ENCODE measurements at regions of chr11 and their contacts with region 1.

Region 1: DNA sequence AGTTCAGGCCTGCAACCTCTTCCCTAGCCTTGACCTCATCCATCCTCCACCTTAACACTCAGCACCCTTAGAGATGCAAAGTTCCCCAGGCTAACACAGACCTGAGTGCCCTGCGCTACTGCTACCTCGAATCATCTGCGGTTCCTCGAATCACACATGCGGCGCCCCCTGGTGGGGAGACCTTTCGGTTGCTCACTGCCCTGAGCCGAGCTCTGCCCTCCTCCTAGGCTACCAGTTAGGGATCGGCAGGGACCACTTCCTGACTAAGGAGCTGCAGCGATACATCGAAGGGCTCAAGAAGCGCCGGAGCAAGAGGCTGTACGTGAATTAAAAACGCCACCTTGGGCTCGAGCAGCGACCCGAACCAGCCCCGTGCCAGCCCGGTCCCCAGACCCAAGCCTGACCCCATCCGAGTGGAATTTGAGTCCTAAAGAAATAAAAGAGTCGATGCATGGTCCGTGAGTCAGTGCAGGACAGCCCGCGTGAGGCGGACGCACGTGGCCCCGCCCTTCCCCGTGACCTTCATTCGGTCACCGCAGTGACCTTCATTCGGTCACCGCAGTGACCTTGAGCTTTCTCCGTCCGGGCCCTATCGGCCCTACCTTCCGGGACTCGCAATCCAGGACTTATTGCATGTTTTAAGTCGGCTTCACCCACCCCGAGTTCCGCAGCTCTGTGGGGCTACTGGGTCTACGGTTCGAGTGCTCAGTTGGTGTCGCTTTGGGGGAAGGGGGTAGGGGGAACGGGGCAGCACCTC is 830 bp upstream of the ESRRA start:
- DNase-seq: peak; percentile 78
- H3K4me3 ChIP-seq: peak overlapping the region; percentile 72
- H3K27ac ChIP-seq: peak overlapping the region; percentile 84
- H3K27me3 ChIP-seq: peaks cover 14% of the 10 kb centered on the region
- CTCF ChIP-seq: peak; percentile 84

Region 2: DNA sequence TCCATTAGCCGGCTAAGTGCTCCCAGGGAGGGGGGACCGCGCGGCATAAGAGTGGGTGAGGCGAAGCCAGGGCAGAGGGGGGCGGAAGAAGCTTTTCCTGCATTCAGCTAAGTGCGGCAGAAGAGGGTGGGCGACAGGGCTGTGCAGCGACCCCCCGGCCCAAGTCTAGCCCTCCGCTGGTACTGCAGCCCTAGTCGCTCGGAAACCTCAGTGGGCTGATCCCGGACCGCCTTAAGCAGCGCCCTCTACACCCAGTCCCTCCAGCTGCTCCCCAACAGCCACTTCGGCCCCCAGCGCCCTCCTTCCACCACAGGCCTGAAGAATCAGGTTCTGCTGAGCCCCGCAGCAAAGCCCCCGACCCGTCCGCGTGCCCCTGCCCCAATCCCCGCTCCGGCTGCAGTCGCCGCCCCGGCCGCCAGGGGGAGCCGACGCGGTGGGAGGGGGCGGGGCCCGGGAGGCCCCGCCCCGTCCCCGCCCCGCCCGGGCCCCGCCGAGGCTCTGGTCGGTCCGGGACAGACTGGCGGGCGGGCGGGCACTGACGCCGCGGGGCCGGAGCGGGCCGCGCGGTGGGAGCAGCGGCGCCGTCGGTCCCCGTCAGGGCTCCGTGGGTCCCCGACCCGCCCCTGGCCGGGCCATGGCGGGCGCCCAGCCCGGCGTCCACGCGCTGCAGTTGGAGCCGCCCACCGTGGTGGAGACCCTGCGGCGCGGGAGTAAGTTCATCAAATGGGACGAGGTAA is 53.3 kb before region 1 on chr11 and contains the start of gene PLCB3:
- CTCF ChIA-PET with region 1: interaction called, 50 read pairs
- POLR2A ChIA-PET with region 1: no interaction called
- DNase-seq: no peak
- H3K4me3 ChIP-seq: peak within 1 kb of the TSS; percentile 77
- H3K27ac ChIP-seq: peak within 1 kb of the TSS; percentile 11
- H3K27me3 ChIP-seq: no peaks in the 10 kb centered on the region
- CTCF ChIP-seq: peak; percentile 53
- polyA plus RNA-seq, gene PLCB3: 11.7 and 13.0 TPM in 2 replicates

Region 3: DNA sequence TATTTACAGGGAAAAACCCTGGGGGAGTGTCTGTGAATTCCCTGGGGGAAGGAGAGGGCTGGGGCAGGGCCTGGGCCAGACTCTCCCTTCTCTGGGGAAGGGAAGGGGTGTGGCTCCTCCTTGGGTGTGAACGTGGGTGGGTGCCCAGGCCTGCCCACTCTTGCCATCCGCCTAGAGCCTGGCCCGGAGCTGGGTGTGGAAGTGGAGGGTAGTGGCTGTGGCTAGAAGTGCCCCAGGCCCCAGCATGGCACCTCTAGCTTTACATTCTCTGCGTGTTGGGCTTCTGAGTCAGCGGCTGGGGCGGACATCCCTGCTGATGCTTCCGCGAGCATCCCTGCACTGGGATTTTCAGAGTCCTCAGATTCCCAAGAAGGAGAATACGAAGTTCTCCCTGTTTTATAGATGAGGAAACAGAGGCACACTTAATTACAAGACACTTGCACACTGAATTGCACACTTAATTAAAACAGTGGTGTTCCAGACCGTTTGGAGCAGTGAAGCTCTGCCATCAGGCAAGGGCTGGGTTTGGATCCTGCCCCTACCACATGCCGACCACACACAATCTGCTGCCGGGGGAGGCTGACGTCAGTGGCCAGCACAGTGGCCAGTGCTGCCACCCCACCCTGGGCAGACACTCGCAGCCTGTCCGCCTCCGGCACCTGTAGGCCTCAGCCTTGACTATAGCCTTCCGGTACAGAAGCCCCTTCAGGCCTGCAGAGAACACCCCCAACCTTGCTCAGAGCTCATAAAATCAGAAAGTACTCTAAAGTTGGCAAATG is 27.7 kb before region 1 on chr11:
- CTCF ChIA-PET with region 1: interaction called, 124 read pairs
- POLR2A ChIA-PET with region 1: interaction called, 12 read pairs
- DNase-seq: no peak
- H3K4me3 ChIP-seq: no peak overlapping the region
- H3K27ac ChIP-seq: no peak overlapping the region
- H3K27me3 ChIP-seq: no peaks in the 10 kb centered on the region
- CTCF ChIP-seq: no peak

Region 4: GRCh38 chr11:64317957-64318693 is 13.6 kb after region 1 on chr11 and contains the start of gene PRDX5:
- CTCF ChIA-PET with region 1: interaction called, 13 read pairs
- POLR2A ChIA-PET with region 1: interaction called, 4 read pairs
- DNase-seq: peak; percentile 85
- H3K4me3 ChIP-seq: peak within 1 kb of the TSS; percentile 90
- H3K27ac ChIP-seq: peak within 1 kb of the TSS; percentile 96
- H3K27me3 ChIP-seq: no peaks in the 10 kb centered on the region
- CTCF ChIP-seq: peak; percentile 12; the same call in 1 of the 2 replicates
- polyA plus RNA-seq, gene PRDX5: 366 and 383 TPM in 2 replicates

Region 5: DNA sequence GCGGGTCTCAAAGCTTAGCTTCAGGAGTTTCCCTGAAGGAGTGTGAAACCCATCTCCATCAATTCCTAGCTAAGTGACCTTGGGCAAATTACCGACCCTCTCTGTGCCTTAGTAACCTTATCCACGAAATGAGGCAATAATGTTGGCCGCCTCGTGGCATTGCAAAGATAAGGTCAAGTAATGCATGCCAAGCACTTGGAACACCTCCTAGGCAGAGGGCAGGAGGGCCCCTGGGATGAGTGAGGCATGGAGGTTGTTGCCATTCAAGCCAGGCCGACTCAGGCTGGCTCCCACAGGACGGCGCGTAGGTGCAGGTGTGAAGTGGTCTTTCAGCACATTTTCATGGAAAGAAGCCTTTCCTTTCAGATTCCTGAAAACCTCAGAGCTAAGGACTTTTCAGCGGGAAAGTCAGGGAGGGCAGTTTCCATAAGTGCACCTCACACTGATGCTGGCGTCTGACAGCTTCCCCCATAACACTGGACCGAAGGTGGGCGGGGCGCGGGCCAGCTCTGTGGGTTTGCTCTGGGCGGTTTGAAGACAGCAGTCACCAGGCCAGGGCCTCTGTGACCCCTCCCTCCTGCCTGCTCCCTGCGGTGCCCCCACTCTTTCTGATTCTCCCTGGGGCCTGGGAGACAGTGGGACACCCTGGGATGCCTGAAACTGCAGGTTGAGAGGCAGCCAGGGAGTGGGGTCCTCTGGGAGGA is 79.7 kb after region 1 on chr11:
- CTCF ChIA-PET with region 1: no interaction called
- POLR2A ChIA-PET with region 1: no interaction called
- DNase-seq: no peak
- H3K4me3 ChIP-seq: no peak overlapping the region
- H3K27ac ChIP-seq: no peak overlapping the region
- H3K27me3 ChIP-seq: peaks cover 28% of the 10 kb centered on the region
- CTCF ChIP-seq: no peak